Activated CD4-positive, alpha-beta memory T cell treated with anti-CD3 and anti-CD28 coated beads for 36 hours (primary cell): ENCODE measurements at regions of chr12 and their contacts with region 1.

Region 1: DNA sequence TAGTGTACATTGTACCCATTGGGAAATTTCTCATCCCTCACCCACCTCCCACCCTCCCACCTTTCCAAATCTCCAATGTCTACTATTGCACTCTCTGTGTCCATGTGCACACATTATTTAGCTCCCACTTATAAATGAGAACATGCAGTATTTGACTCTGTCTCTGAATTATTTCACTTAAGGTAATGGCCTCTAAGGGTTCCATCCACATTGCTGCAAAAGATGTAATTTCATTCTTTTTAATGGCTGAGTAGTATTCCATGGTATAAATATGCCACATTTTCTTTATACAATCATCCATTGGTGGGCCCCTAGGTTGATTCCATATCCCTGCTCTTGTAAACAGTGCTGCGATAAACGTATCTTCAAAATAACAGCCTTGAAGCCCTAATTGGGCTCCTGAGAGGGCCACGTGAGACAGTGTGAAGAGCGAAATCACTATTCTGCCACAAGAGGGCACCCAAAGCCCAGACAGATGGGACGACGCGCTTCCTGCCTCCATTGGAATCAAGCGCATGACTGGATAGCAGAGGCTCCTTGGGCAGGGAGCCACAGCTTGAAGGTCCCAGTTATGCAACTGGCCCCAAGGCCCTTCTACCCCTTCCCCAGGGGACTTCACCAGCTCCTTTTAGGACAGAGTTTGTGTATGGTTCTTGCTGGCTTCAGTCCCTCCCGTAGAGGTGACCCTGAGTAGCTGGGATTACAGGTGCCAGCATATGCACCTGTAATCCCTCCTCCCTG is 21.3 kb upstream of the CD27 start:
- DNase-seq: peak; percentile 86
- H3K4me3 Mint-ChIP-seq: no peak overlapping the region
- H3K27ac Mint-ChIP-seq: peak overlapping the region; percentile 69
- H3K4me1 Mint-ChIP-seq: peaks cover 43% of the 10 kb centered on the region
- H3K27me3 Mint-ChIP-seq: peaks cover 3% of the 10 kb centered on the region

Region 2: GRCh38 chr12:6335451-6336078 is 87.9 kb before region 1 on chr12:
- CTCF ChIA-PET with region 1: interaction called, 9 read pairs
- POLR2A ChIA-PET with region 1: no interaction called
- intact Hi-C with region 1: loop called (anchors 2 kb)
- DNase-seq: peak; percentile 94
- H3K4me3 Mint-ChIP-seq: no peak overlapping the region
- H3K27ac Mint-ChIP-seq: no peak overlapping the region
- H3K4me1 Mint-ChIP-seq: peaks cover 20% of the 10 kb centered on the region
- H3K27me3 Mint-ChIP-seq: no peaks in the 10 kb centered on the region

Region 3: DNA sequence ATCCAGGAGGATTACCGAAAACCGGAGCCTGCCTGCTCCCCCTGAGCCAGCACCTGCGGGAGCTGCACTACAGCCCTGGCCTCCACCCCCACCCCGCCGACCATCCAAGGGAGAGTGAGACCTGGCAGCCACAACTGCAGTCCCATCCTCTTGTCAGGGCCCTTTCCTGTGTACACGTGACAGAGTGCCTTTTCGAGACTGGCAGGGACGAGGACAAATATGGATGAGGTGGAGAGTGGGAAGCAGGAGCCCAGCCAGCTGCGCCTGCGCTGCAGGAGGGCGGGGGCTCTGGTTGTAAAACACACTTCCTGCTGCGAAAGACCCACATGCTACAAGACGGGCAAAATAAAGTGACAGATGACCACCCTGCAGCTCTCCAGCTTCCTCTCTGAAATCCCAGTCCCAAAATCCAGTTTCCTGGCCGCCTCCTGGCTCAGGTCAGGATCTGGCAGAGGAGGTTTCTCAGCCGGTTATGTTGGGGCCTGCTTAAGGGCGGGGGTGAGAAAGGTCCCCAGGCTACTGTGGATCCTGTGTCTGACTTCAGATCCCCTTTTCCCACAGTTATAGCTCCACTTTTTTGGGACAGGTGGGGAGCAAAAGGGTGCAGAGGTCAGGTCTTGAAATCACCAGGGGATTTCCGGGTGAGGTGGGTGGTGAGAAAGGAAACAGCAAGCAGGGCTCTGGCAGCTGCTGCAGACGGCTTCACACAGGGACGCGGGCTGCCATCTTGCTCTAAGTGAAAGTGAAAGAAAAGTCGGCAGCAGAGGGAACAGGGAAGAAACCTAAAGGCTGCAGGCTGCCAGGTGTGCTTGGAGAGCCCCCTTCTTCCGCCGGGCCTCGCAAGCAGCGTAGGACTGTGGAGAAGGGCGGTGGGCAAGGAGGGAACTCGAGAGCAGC is 28.2 kb after region 1 on chr12 and contains the start of gene TAPBPL:
- CTCF ChIA-PET with region 1: interaction called, 21 read pairs
- POLR2A ChIA-PET with region 1: interaction called, 10 read pairs
- intact Hi-C with region 1: no loop called
- DNase-seq: peak; percentile 90
- H3K4me3 Mint-ChIP-seq: peak within 1 kb of the TSS; percentile 99
- H3K27ac Mint-ChIP-seq: peak within 1 kb of the TSS; percentile 100
- H3K4me1 Mint-ChIP-seq: peaks cover 62% of the 10 kb centered on the region
- H3K27me3 Mint-ChIP-seq: no peaks in the 10 kb centered on the region
- total RNA-seq, gene TAPBPL: 33.4 to 35.0 TPM

Region 4: GRCh38 chr12:6493497-6494257 is 70.2 kb after region 1 on chr12 and contains the start of gene NCAPD2:
- CTCF ChIA-PET with region 1: interaction called, 10 read pairs
- POLR2A ChIA-PET with region 1: interaction called, 5 read pairs
- intact Hi-C with region 1: loop called (anchors 1 kb)
- DNase-seq: peak; percentile 98
- H3K4me3 Mint-ChIP-seq: peak within 1 kb of the TSS; percentile 94
- H3K27ac Mint-ChIP-seq: peak within 1 kb of the TSS; percentile 100
- H3K4me1 Mint-ChIP-seq: peaks cover 38% of the 10 kb centered on the region
- H3K27me3 Mint-ChIP-seq: no peaks in the 10 kb centered on the region
- total RNA-seq, gene NCAPD2: 192 to 196 TPM

Region 5: GRCh38 chr12:6540181-6540877 is 116.9 kb after region 1 on chr12:
- CTCF ChIA-PET with region 1: interaction called, 61 read pairs
- POLR2A ChIA-PET with region 1: interaction called, 35 read pairs
- intact Hi-C with region 1: loop called (anchors 1 kb)
- DNase-seq: peak; percentile 73
- H3K4me3 Mint-ChIP-seq: peak overlapping the region; percentile 51
- H3K27ac Mint-ChIP-seq: peak overlapping the region; percentile 81
- H3K4me1 Mint-ChIP-seq: peaks cover 58% of the 10 kb centered on the region
- H3K27me3 Mint-ChIP-seq: no peaks in the 10 kb centered on the region

Region 6: DNA sequence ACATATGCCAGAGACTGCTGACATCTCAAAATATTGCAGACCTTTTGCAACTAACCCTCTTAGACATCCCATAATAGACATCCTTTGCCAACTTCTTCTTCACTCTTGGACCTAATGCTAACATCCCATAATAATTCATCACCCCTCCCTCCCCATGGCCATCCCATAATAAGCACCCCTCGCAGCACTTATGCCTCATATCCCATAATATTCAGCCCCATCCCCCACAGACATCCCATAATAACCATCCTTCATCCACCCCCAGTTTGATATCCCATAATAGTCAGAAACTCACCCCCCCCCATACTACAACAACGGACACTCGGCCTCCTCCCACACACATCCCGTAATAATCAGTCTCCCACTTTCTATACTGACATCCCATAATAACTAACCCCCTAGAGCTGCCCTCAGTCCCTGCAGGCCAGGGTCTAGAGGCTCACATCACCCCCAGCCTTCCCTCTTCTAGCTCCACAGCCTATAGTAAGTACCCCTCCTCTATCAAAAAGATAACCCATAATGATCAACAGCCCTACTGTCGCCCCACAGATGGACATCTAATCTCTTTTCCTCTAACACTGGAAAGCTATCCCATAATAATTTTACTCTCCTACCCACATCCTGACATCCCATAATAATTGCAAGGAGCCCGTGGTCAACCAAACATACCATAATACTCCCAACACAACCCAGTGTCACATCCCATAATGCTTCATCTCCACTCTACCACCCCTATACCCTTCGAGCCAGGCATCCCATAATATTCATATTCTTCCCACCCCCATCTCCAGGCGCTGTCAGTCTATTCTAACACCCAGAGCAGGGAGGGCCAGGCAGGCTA is 184.5 kb after region 1 on chr12:
- CTCF ChIA-PET with region 1: no interaction called
- POLR2A ChIA-PET with region 1: no interaction called
- intact Hi-C with region 1: loop called (anchors 5 kb)
- DNase-seq: peak; percentile 82
- H3K4me3 Mint-ChIP-seq: no peak overlapping the region
- H3K27ac Mint-ChIP-seq: no peak overlapping the region
- H3K4me1 Mint-ChIP-seq: peaks cover 53% of the 10 kb centered on the region
- H3K27me3 Mint-ChIP-seq: no peaks in the 10 kb centered on the region